ENCODE measurements at regions of chr7 and their contacts with region 1.

Region 1: GRCh38 chr7:27196287-27196767 is 3.6 kb downstream of the HOXA13 start:
- DNase-seq: peak; percentile 81 to 90
- ATAC-seq: peak in 2 of 4 donors; percentile 60 to 71
- H3K4me3 ChIP-seq: no peak overlapping the region
- H3K27ac ChIP-seq: no peak overlapping the region
- H3K4me1 ChIP-seq: peaks cover 10% of the 10 kb centered on the region
- H3K27me3 ChIP-seq: peaks cover 0 to 95% (median 38%) of the 10 kb centered on the region in 3 donors
- CTCF ChIP-seq: peak; percentile 82

Region 2: GRCh38 chr7:27515933-27516332 is 319.6 kb after region 1 on chr7:
- intact Hi-C with region 1: no loop called
- DNase-seq: no peak
- ATAC-seq: no peak
- H3K4me3 ChIP-seq: no peak overlapping the region
- H3K27ac ChIP-seq: no peak overlapping the region
- H3K4me1 ChIP-seq: peaks cover 7% of the 10 kb centered on the region
- H3K27me3 ChIP-seq: no peaks in the 10 kb centered on the region
- CTCF ChIP-seq: no peak

Region 3: DNA sequence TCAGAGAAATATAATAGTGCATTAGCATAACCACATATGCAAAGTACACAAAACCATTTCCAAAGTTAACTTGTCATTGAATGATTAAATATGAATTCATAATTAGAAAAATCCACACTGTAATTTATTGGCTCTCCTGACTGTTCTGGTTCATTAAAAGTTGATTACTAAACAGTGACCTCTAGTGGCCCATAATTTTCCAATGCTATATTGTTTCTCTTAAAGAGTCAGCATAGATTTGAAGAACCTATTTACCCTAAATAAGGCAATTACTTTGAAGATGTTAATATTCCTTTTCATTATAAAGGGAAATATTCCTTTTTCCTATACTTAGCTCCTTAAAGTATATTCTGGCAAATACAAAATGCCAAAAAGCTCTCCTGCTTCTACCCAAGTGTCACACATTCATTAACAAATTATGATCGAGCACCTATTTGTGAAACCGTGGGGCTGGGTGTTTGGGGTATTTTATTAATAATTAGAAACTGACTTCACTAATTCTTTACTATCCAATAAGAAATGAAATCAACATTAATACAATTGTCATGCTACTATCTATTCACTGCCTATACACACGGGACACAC is 380.1 kb after region 1 on chr7:
- intact Hi-C with region 1: loop called (anchors 5 kb)
- DNase-seq: no peak
- ATAC-seq: peak in 3 of 4 donors; percentile 40 to 80 (median 42)
- H3K4me3 ChIP-seq: no peak overlapping the region
- H3K27ac ChIP-seq: no peak overlapping the region
- H3K4me1 ChIP-seq: no peaks in the 10 kb centered on the region
- H3K27me3 ChIP-seq: no peaks in the 10 kb centered on the region
- CTCF ChIP-seq: peak; percentile 75

Region 4: DNA sequence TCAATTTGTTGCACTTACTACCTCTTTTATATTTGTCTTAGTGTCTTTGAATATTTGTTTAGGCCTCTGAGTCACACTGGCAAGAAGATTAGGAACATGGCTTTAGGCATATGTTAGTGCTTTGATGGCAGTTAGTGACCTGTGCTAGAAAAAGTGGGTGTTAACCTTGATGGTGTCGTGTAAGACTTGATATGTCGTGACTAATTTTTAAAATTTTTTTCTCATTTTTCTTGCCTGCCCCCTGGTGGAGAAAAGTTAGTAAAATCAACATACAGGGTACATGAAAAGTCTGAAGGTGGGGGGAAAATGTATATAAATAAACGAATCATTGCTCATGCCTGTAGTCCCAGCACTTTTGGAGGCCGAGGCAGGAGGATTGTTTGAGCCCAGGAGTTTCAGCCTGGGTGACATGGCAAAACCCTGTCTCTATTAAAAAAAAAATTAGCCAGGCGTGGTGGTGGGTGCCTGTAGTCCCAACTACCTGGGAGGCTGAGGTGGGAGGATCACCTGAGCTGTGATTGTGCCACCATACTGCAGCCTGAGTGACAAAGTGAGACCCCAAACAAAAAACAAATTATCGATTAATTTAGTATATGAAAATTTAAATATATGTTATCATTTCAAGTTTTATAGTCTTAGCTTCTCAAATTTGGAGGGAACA is 588.2 kb after region 1 on chr7:
- intact Hi-C with region 1: loop called in 1 of 2 experiments (anchors 10 kb)
- DNase-seq: no peak
- ATAC-seq: peak in 2 of 4 donors; percentile 27 to 50
- H3K4me3 ChIP-seq: no peak overlapping the region
- H3K27ac ChIP-seq: no peak overlapping the region
- H3K4me1 ChIP-seq: peaks cover 11% of the 10 kb centered on the region
- H3K27me3 ChIP-seq: no peaks in the 10 kb centered on the region
- CTCF ChIP-seq: peak; percentile 45

Region 5: DNA sequence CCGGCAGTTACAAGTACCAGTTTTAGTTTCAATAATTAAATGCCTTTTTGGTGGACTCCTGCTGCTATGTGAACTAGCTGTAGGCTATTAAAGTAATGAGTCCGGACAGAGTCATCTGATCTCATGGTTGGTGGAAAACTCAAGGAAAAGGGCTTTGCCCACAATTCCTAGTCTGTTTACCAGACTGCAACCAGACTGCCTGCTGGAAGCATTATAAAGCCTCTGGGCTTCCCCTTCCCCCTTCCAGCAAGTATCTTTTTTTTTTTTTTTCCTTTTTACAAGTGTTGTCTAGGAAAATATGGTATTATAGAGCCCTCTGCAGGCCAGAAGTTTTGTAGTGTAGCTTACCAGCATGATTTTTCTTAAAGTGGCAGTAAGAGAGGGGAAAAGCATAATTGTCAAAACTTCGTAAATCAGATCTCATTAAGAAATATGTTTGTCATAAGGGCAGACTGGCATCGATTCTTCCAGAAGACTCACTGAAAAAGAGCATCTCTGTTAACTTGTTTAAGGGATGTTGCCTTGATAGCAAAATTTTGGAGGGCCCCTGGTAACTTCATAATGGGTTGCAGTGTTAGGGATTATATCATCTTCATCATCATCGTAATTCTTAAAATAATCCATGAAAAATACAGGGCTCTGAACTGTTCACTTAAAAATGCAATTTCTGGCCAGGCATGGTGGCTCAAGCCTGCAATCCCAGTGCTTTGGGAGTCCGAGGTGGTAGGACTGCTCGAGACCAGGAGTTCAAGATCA is 724.9 kb after region 1 on chr7:
- intact Hi-C with region 1: loop called (anchors 2 to 5 kb)
- DNase-seq: no peak
- ATAC-seq: peak; percentile 52 to 87 (median 60)
- H3K4me3 ChIP-seq: peak overlapping the region; percentile 17
- H3K27ac ChIP-seq: no peak overlapping the region
- H3K4me1 ChIP-seq: no peaks in the 10 kb centered on the region
- H3K27me3 ChIP-seq: no peaks in the 10 kb centered on the region
- CTCF ChIP-seq: peak; percentile 60

Region 6: DNA sequence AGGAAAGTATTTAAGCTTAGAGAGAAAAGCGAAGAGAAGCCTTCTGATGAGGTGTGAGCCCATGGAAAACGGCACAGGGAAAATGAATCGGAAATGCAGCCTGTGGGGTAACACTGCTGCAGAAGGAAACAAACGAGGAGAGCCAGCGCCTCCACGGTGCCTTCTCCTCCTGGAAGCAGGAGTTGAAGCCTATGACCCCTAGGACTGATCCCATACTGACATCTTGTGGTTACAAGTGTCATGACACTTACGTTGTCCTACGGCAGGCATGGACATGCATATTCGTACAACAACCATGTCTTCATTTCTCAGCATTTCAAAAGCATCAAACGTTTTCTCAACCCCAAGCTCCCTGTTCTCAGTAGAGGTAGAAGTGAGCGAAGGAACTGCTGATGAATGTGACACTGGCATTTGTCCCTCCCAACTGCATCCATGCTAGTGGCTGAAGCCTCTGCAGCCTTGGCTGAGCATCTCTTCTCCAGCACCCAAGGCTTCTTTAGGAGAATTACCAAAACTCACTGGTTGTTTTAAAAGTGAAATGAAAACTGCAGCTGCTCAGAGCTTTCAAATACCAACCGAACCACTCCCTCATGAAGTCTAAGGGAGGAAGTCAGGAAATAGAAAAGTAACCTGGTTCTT is 824.1 kb after region 1 on chr7:
- intact Hi-C with region 1: loop called (anchors 5 to 10 kb)
- DNase-seq: peak; percentile 55 to 77
- ATAC-seq: peak; percentile 85 to 94 (median 88)
- H3K4me3 ChIP-seq: no peak overlapping the region
- H3K27ac ChIP-seq: no peak overlapping the region
- H3K4me1 ChIP-seq: peaks cover 36% of the 10 kb centered on the region
- H3K27me3 ChIP-seq: no peaks in the 10 kb centered on the region
- CTCF ChIP-seq: peak; percentile 89

Region 7: GRCh38 chr7:28078036-28078901 is 881.9 kb after region 1 on chr7:
- intact Hi-C with region 1: loop called in 1 of 2 experiments (anchors 5 kb)
- DNase-seq: peak in 1 of 2 donors; percentile 43
- ATAC-seq: peak; percentile 39 to 80 (median 67)
- H3K4me3 ChIP-seq: no peak overlapping the region
- H3K27ac ChIP-seq: no peak overlapping the region
- H3K4me1 ChIP-seq: peaks cover 21% of the 10 kb centered on the region
- H3K27me3 ChIP-seq: no peaks in the 10 kb centered on the region
- CTCF ChIP-seq: peak; percentile 90

Region 8: GRCh38 chr7:28096713-28097112 is 900.4 kb after region 1 on chr7:
- intact Hi-C with region 1: loop called (anchors 5 to 10 kb)
- DNase-seq: no peak
- ATAC-seq: peak; percentile 76 to 87 (median 85)
- H3K4me3 ChIP-seq: no peak overlapping the region
- H3K27ac ChIP-seq: no peak overlapping the region
- H3K4me1 ChIP-seq: peaks cover 5% of the 10 kb centered on the region
- H3K27me3 ChIP-seq: no peaks in the 10 kb centered on the region
- CTCF ChIP-seq: peak; percentile 88

Measured in psoas muscle (tissue), 8 donors.